Natural killer cell (primary cell): ENCODE measurements at regions of chr18 and their contacts with region 1.

Region 1: DNA sequence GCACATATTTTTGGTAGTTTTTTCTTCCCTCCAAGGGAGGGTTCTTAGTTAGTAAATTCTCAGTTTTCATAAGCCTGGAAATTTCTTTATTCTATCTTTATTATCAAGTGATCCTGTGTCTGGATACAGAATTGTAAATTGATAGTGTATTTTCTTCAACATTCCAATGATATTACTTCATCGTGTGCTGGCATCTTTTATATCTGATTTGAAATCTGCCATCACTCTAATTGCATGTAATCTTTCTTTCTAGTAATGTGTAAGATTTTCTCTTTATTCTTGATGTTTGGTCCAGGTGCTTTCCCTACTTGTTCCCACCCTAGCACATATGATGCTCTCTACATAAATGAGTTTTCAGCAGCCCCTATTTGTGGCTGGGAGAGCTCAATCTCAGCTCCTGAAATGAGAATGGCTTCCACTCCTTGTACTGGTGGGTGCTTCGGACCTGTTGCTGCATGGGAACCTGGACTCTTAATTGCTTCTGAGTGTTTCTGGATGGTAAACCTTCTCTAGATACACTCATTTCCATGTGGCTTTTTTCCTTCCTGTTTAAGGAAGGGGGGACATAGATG is 102.7 kb downstream of the SMIM21 start:
- DNase-seq: no peak
- ATAC-seq: no peak
- H3K4me3 ChIP-seq: no peak overlapping the region
- H3K4me3 Mint-ChIP-seq: no peak overlapping the region
- H3K27ac ChIP-seq: no peak overlapping the region
- H3K27ac Mint-ChIP-seq: no peak overlapping the region
- H3K4me1 ChIP-seq: no peaks in the 10 kb centered on the region
- H3K4me1 Mint-ChIP-seq: no peaks in the 10 kb centered on the region
- H3K27me3 ChIP-seq: no peaks in the 10 kb centered on the region
- H3K27me3 Mint-ChIP-seq: peaks cover 8 to 27% of the 10 kb centered on the region in 2 donors
- CTCF ChIP-seq: no peak

Region 2: DNA sequence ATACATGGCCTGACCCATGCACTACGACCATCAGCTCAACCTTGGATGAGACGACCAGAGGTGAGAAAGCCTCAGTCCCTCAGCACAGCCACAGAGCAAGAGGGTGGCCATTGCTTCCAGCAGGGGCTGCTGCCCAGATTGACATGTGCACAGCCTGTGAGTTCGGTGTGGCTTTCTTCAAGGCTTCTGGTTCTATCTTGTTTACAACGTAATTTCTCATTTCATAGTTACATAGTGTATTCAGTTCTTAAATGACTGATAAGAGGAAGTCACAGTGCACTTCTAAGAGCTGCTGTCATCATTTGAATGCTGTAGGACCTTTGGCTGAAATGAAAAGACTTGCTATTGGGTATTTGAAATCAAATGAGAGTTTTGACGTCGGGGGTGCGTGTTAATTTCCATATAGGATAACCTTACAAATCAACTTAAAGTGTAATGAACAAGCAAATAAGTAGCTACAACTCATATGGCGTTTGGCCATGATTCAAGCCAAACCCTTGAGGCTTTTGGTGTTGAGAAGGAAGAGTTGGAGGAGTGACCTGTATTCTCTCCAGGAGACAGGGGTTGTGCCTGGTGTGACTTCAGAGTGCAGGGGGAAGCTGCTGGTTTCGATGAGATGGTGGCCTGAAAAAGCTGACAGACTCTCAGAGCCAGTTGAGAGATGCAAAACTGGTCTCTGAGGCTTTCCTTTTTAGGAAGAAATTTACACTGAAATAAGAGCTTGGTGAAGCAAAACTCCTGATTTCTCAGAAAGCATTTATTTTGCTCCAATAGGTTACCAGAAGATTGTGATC is 63.1 kb before region 1 on chr18:
- intact Hi-C with region 1: loop called (anchors 5 kb)
- DNase-seq: no peak
- ATAC-seq: peak in 2 of 3 donors; percentile 24 to 30
- H3K4me3 ChIP-seq: no peak overlapping the region
- H3K4me3 Mint-ChIP-seq: no peak overlapping the region
- H3K27ac ChIP-seq: no peak overlapping the region
- H3K27ac Mint-ChIP-seq: peak overlapping the region; percentile 60 to 62
- H3K4me1 ChIP-seq: peaks cover 13% of the 10 kb centered on the region
- H3K4me1 Mint-ChIP-seq: peaks cover 62 to 80% of the 10 kb centered on the region in 2 donors
- H3K27me3 ChIP-seq: no peaks in the 10 kb centered on the region
- H3K27me3 Mint-ChIP-seq: no peaks in the 10 kb centered on the region
- CTCF ChIP-seq: no peak

Region 3: GRCh38 chr18:75625966-75626365 is 301.2 kb after region 1 on chr18:
- intact Hi-C with region 1: no loop called
- DNase-seq: no peak
- ATAC-seq: no peak
- H3K4me3 ChIP-seq: no peak overlapping the region
- H3K4me3 Mint-ChIP-seq: no peak overlapping the region
- H3K27ac ChIP-seq: no peak overlapping the region
- H3K27ac Mint-ChIP-seq: no peak overlapping the region
- H3K4me1 ChIP-seq: no peaks in the 10 kb centered on the region
- H3K4me1 Mint-ChIP-seq: no peaks in the 10 kb centered on the region
- H3K27me3 ChIP-seq: no peaks in the 10 kb centered on the region
- H3K27me3 Mint-ChIP-seq: peaks cover 0 to 4% of the 10 kb centered on the region in 2 donors
- CTCF ChIP-seq: no peak